ENCODE measurements at regions of chr1 and their contacts with region 1.

Region 1: DNA sequence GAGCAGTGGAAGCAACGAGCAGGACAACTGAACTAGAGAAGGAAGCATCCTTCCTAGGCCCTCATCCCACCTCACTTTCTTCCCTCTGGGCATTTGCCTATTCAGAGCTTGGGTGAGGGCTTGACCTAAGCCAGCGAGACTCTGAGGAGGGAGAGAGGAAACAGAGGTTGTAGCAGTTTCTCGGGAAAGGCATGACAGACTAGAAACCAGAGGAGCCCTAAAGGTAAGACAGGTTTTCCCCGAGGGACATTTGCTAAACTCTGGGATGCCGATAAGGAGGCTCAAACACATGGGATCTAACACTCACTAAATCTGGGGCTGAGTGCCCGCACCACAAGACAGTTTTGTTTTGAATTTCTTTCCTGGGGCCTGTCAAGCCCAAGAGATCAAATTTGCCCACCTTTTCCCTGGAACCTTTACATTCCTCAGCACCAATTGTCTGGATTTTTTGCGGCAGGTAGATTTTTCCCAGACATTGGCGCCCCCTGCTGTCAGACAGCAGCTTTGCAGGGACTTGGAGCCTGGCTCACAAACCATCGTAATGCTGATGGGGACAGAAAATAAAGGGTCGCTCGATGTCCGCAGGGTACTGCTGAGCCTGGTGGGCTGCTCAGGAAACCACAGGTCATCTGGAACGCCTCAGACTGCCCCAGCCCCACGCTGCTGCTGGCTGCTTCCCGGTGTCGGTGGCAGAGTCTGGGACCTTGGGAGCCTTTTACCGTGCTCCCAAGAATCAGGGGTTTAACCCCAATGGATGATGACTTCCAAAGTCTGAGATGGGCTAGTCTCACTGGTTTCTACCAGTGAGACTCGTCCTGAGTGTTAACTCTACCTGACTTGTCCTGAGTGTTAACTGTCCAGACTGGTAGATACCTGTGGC is 23.4 kb upstream of the TSPAN2 start:
- DNase-seq: peak; percentile 56
- ATAC-seq: peak; percentile 64
- H3K4me3 Mint-ChIP-seq: no peak overlapping the region
- H3K27ac Mint-ChIP-seq: no peak overlapping the region
- H3K4me1 Mint-ChIP-seq: peaks cover 8% of the 10 kb centered on the region
- H3K27me3 Mint-ChIP-seq: no peaks in the 10 kb centered on the region
- CTCF ChIP-seq: peak; percentile 99

Region 2: DNA sequence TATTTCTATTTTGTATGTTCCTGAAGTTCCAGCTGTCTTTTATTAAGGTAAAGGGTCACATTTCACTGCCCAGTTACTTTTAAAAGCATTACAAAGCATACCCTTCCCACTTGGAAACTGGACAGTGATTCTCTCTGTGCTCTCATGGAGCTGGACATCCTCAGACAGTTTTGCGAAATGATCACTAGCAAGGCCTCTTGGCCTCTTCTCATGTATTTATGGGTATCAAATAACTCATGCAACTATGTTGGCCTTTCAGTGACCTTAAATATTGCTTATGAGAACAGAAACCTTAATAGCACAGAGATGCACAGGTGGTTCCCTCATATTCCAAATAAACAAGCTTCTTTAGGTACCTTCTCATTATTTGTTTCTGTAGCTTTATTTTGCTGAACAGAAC is 409.5 kb before region 1 on chr1:
- CTCF ChIA-PET with region 1: no interaction called
- POLR2A ChIA-PET with region 1: no interaction called
- intact Hi-C with region 1: no loop called
- DNase-seq: no peak
- ATAC-seq: no peak
- H3K4me3 Mint-ChIP-seq: no peak overlapping the region
- H3K27ac Mint-ChIP-seq: no peak overlapping the region
- H3K4me1 Mint-ChIP-seq: peaks cover 2% of the 10 kb centered on the region
- H3K27me3 Mint-ChIP-seq: peaks cover under 1% of the 10 kb centered on the region
- CTCF ChIP-seq: no peak

Region 3: DNA sequence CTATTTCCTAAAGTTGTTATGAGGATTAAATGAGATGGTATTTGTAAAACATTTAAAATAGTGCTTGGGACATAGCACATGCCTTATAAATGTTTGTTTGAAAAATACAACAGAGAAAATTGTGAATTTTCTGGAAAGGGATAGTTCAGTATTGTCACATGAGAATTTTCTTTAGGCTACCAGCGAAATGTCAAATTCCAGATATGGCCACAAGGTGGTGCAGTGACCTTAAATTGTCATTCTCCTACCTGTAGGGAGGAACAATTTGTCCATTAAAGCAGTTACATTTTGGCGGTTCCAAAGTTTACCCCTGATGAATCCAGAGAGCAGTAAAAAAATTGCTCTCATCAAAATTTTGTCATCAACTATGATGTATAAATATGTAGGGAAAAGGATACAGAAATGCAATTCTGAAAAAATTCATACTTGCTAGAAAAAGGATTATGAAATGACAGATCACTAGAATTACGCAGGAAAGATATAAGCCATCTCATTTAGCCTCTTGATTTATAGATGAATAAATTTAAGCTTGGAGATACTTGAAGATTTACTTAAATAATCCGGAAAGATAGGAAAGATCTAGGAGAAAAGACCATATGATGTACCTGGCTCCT is 133.4 kb before region 1 on chr1:
- CTCF ChIA-PET with region 1: interaction called, 41 read pairs
- POLR2A ChIA-PET with region 1: no interaction called
- intact Hi-C with region 1: loop called (anchors 1 kb)
- DNase-seq: peak; percentile 80
- ATAC-seq: no peak
- H3K4me3 Mint-ChIP-seq: no peak overlapping the region
- H3K27ac Mint-ChIP-seq: no peak overlapping the region
- H3K4me1 Mint-ChIP-seq: no peaks in the 10 kb centered on the region
- H3K27me3 Mint-ChIP-seq: peaks cover 8% of the 10 kb centered on the region
- CTCF ChIP-seq: peak; percentile 77

Region 4: DNA sequence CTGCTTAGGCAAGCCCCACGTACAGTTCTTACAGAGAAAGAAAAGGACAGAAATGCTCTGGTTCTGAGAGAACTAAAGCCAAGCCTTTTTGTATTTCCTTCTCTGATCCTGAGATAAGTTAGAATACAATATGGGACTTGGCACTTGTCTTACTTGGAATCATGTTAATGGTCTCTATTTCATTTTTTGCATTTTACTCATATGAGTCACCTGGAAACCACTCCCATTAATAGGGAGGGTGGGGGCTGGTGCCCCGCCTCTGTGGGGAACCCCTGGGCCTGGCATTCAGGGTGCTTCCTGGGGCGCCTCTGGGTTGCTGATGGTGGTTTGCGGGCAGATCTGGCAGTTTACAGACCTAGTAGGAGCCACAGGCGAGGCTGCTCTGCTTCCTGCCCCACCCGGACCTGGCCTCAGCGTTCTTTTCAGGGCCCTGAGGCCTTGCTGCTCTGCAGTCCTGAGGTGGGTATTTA is 50.2 kb before region 1 on chr1:
- CTCF ChIA-PET with region 1: interaction called, 11 read pairs
- POLR2A ChIA-PET with region 1: no interaction called
- intact Hi-C with region 1: no loop called
- DNase-seq: peak; percentile 98
- ATAC-seq: peak; percentile 96
- H3K4me3 Mint-ChIP-seq: peak overlapping the region; percentile 30
- H3K27ac Mint-ChIP-seq: peak overlapping the region; percentile 94
- H3K4me1 Mint-ChIP-seq: peaks cover 42% of the 10 kb centered on the region
- H3K27me3 Mint-ChIP-seq: no peaks in the 10 kb centered on the region
- CTCF ChIP-seq: no peak

Region 5: DNA sequence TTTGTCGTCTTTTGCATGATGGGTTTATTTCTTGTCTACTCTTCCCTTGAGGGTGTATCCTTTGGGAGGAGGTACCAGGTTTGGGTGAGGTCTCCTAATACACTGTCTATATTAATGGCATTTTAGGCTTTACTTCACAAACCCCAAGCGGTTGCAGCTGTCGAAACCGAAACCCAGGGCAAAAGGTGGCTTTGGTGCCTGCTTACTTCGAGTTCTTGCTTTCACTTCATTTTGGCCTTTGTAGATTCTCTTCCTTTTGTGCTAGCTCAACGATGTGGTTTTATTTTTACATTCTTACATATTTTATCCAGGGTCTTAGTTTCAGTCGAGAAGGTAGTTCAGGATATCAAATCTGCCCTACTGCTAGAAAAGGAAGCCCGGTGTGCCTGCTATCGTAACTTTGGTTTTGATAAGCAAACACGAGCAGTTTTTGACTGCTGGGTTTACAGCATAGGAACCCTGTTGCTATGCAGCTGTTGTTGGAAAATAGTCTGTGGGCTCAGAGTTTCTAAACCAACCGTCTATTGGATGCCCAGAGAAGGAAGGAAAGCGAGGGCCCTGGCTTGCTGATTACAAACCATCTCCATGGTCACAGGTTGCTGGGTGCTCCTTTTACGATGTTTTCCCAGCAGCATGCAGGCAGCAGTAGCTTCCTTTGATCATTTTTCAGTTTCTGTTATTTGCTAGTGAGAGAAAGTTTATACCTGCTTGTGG is 13.6 kb before region 1 on chr1:
- CTCF ChIA-PET with region 1: interaction called, 13 read pairs
- POLR2A ChIA-PET with region 1: interaction called, 3 read pairs
- intact Hi-C with region 1: no loop called
- DNase-seq: peak; percentile 85
- ATAC-seq: peak; percentile 86
- H3K4me3 Mint-ChIP-seq: peak overlapping the region; percentile 77
- H3K27ac Mint-ChIP-seq: peak overlapping the region; percentile 88
- H3K4me1 Mint-ChIP-seq: peaks cover 33% of the 10 kb centered on the region
- H3K27me3 Mint-ChIP-seq: no peaks in the 10 kb centered on the region
- CTCF ChIP-seq: no peak

Region 6: GRCh38 chr1:116194568-116195474 is 1082.1 kb after region 1 on chr1:
- CTCF ChIA-PET with region 1: no interaction called
- POLR2A ChIA-PET with region 1: no interaction called
- intact Hi-C with region 1: no loop called
- DNase-seq: no peak
- ATAC-seq: no peak
- H3K4me3 Mint-ChIP-seq: no peak overlapping the region
- H3K27ac Mint-ChIP-seq: no peak overlapping the region
- H3K4me1 Mint-ChIP-seq: no peaks in the 10 kb centered on the region
- H3K27me3 Mint-ChIP-seq: no peaks in the 10 kb centered on the region
- CTCF ChIP-seq: no peak

Measured in activated CD8-positive, alpha-beta T cell treated with anti-CD3 and anti-CD28 coated beads for 36 hours (primary cell).